GM13976 (cell line): ENCODE measurements at regions of chr16 and their contacts with region 1.

Region 1: DNA sequence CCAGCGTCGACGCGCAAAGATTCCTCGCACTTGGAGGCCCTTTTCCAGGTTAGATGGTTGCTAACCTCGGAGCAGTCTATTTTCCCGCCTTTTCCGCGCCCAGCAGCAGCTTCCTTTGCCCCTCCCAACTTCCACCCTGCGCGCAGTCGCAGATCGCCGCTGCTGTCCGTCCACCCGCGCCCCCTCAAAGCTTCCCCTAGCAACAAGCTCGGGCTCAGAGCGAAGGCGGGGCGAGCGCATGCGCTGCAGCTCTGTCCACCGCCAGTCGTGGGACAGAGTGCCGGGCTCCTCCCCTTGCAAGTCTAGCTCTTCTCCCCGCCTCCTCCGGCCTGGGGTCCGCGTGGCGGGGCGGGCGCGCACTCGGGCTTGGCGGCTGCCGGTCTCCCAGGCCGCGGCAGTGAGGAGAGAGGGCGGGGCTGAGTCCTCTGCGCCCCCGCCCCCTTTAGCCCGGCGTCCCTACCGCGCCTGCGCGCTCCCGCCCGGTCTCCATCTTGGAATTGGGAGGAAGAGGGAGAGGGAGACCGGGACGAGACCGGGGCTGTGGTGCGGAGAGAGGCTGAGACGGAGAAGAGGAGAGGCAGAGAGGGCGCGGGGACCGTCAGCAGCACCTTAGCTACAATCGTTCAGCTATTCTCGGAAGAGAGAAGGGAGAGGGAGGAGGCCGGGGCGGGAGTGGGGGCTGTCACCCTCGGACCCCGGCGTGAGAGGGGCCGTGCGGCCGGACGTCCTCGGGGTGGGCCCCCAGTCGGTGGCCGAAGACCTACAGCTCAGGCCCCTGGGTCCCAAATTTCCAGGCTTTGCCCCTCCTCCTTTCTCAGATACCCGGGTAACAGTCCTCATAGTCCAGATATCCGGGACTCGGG is at the start of gene TAOK2:
- DNase-seq: peak; percentile 100
- CTCF ChIP-seq: no peak

Region 2: DNA sequence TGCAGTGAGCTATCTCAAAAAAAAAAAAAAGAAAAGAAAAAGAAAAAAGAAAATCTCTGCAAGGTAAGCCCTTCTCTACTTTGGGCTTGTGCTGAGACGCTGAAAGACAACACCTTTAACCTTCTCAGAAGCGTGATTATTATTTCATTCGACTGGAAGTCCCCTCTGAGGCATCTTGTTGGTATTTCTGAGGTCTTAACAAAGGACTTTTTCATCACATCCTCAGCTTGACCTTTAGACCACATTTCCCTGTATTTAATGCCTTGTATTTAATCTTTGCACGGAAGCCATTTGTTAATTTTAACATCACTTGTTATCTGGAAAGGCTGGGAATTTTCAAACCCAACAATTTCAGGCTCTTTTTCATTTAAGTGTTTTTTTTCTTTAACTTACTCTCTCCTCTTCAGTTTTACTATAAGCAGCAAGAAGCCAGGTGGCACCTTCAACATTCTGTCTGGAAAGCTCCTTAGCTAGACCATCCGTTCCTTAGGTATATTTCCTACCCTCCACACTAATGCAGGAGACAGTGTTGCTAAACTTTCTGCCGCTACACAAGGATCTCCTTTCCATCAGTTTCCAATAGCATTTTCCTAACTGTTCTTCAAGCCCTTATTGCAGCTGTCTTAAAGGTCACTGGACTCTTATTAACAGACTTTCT is 57.9 kb before region 1 on chr16:
- in situ Hi-C with region 1: loop called (anchors 10 kb)
- DNase-seq: no peak
- CTCF ChIP-seq: no peak